ENCODE measurements at regions of chr19 and their contacts with region 1.

Region 1: GRCh38 chr19:56538254-56538760 is 441 bp upstream of the ZFP28 start:
- DNase-seq: peak; percentile 80 to 90 (median 88)
- ATAC-seq: peak; percentile 92
- H3K4me3 ChIP-seq: peak overlapping the region; percentile 66
- H3K4me3 Mint-ChIP-seq: peak overlapping the region; percentile 99
- H3K27ac ChIP-seq: peak overlapping the region; percentile 75 to 82
- H3K27ac Mint-ChIP-seq: peak overlapping the region; percentile 96
- H3K4me1 ChIP-seq: peaks cover 17% of the 10 kb centered on the region
- H3K4me1 Mint-ChIP-seq: peaks cover 34% of the 10 kb centered on the region
- H3K27me3 ChIP-seq: no peaks in the 10 kb centered on the region
- H3K27me3 Mint-ChIP-seq: no peaks in the 10 kb centered on the region
- CTCF ChIP-seq: no peak

Region 2: GRCh38 chr19:56403764-56404704 is 134.3 kb before region 1 on chr19 and contains the start of gene ZNF583:
- CTCF ChIA-PET with region 1: no interaction called
- POLR2A ChIA-PET with region 1: no interaction called
- intact Hi-C with region 1: loop called in 1 of 2 experiments (anchors 10 kb)
- DNase-seq: peak; percentile 79 to 95 (median 88)
- ATAC-seq: peak; percentile 84
- H3K4me3 ChIP-seq: peak within 1 kb of the TSS; percentile 82
- H3K4me3 Mint-ChIP-seq: peak within 1 kb of the TSS; percentile 99
- H3K27ac ChIP-seq: peak within 1 kb of the TSS; percentile 88 to 96
- H3K27ac Mint-ChIP-seq: peak within 1 kb of the TSS; percentile 95
- H3K4me1 ChIP-seq: peaks cover 22% of the 10 kb centered on the region
- H3K4me1 Mint-ChIP-seq: peaks cover 32% of the 10 kb centered on the region
- H3K27me3 ChIP-seq: no peaks in the 10 kb centered on the region
- H3K27me3 Mint-ChIP-seq: no peaks in the 10 kb centered on the region
- CTCF ChIP-seq: no peak
- total RNA-seq, gene ZNF583: 0.95 to 1.5 TPM

Region 3: DNA sequence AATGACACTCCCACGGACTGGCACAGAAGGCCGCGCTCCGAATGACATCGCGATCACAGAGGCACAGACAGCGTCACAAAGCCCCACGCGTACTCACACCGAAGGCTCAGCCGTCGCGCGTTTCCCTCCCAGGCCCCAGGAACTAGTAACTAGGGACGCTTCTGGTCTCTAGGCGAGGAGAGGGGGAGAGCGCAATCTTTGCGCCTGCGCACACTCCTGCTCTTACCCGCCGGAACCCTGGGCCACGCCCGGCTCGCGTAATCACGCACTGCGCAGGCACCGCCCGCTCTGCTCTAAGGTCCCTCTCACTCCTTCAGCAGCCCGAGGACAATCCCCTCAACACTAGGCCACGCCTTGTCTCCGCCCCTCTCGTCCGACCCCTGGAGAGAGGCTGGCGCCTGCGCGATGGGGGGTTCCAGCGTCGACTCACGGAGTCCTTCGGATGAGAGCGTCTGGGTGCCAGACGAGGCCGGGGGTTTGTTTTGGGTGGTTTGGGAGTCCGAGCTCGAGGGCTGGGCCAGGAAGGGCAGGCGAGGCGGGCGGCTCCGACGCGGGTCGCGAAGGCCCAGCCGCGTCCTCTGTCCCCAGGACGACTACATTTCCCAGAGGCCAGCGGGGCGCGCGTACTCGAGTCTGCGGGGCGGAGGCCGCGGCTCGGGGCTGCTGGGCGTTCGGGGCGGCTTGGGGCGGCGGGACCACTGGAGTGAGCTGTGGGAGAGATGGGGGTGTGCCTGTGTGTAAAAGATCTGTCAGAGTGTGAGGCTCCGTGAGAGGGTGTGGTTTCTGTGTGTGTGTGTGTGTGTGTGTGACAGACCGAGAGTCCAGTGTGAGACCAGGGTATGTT is 30.6 kb before region 1 on chr19 and contains the start of gene ZNF471:
- CTCF ChIA-PET with region 1: no interaction called
- POLR2A ChIA-PET with region 1: no interaction called
- intact Hi-C with region 1: loop called in 1 of 2 experiments (anchors 1 kb)
- DNase-seq: peak; percentile 65 to 95 (median 76)
- ATAC-seq: peak; percentile 98
- H3K4me3 ChIP-seq: peak within 1 kb of the TSS; percentile 42
- H3K4me3 Mint-ChIP-seq: no peak within 1 kb of the TSS
- H3K27ac ChIP-seq: peak within 1 kb of the TSS in 1 of 2 donors; percentile 77
- H3K27ac Mint-ChIP-seq: no peak within 1 kb of the TSS
- H3K4me1 ChIP-seq: peaks cover 11% of the 10 kb centered on the region
- H3K4me1 Mint-ChIP-seq: no peaks in the 10 kb centered on the region
- H3K27me3 ChIP-seq: peaks cover 9 to 25% of the 10 kb centered on the region in 2 experiments
- H3K27me3 Mint-ChIP-seq: no peaks in the 10 kb centered on the region
- CTCF ChIP-seq: no peak
- total RNA-seq, gene ZNF471: 2.2 to 2.5 TPM

Region 4: DNA sequence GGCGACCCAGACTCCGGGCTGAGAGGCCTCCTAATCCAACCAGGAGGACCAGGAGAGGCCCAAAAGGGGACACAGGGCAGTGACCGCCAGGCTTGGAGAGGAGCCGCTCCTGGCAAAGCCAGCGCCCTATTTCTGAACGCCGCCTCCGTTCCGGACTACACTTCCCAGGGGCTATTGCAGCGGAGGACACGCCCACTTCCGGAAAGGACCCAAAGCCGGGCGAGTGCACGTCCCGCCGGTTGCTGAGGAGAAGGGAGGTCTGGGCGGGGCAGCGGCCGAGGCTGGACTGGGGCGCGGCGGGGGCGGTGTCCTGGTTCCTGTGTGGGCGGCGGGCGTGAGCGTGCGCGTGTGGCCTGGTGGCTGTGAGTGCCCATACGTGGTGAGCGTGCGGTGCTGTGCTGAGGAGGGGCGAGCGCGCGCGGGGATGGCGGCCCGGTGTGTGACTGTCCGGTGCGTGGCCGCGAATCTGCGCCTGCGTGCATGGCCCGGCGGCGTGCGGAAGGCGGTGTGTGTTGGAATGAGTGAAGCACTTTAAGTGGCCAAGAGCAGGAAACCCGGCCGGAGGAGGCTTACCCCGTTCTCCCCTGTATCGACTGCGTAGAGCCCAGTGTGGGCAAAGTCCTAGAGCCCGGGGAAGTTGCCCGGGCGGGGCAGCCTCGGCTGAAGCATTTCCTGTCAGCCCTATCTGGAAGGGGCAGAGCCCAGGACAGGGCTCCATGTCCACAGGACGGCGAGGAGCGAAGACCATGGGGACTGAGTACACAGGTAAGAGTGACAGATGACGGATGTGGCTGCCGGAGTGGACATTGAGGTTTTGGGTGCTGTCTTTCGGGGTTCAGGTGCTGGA is 29.2 kb after region 1 on chr19 and contains the start of gene ZNF470:
- CTCF ChIA-PET with region 1: interaction called, 3 read pairs
- POLR2A ChIA-PET with region 1: no interaction called
- intact Hi-C with region 1: loop called in 1 of 2 experiments (anchors 1 kb)
- DNase-seq: peak; percentile 75 to 91 (median 84)
- ATAC-seq: peak; percentile 96
- H3K4me3 ChIP-seq: peak within 1 kb of the TSS; percentile 67
- H3K4me3 Mint-ChIP-seq: peak within 1 kb of the TSS; percentile 99
- H3K27ac ChIP-seq: peak within 1 kb of the TSS; percentile 15 to 61
- H3K27ac Mint-ChIP-seq: peak within 1 kb of the TSS; percentile 81
- H3K4me1 ChIP-seq: peaks cover 20% of the 10 kb centered on the region
- H3K4me1 Mint-ChIP-seq: peaks cover 27% of the 10 kb centered on the region
- H3K27me3 ChIP-seq: no peaks in the 10 kb centered on the region
- H3K27me3 Mint-ChIP-seq: no peaks in the 10 kb centered on the region
- CTCF ChIP-seq: no peak
- total RNA-seq, gene ZNF470: 0.56 to 0.85 TPM